ENCODE measurements at regions of chr11 and their contacts with region 1.

Region 1: GRCh38 chr11:85854557-85855340 is 434 bp upstream of the CCDC83 start:
- DNase-seq: peak; percentile 86 to 96 (median 89)
- ATAC-seq: peak; percentile 97
- H3K4me3 ChIP-seq: peak overlapping the region; percentile 64 to 72
- H3K4me3 Mint-ChIP-seq: peak overlapping the region; percentile 88
- H3K27ac ChIP-seq: peak overlapping the region; percentile 75 to 77
- H3K27ac Mint-ChIP-seq: peak overlapping the region; percentile 91
- H3K4me1 ChIP-seq: peaks cover 6% of the 10 kb centered on the region
- H3K4me1 Mint-ChIP-seq: peaks cover 8% of the 10 kb centered on the region
- H3K27me3 ChIP-seq: no peaks in the 10 kb centered on the region
- H3K27me3 Mint-ChIP-seq: no peaks in the 10 kb centered on the region
- CTCF ChIP-seq: peak; percentile 84

Region 2: GRCh38 chr11:85602526-85603213 is 252.1 kb before region 1 on chr11:
- CTCF ChIA-PET with region 1: no interaction called
- POLR2A ChIA-PET with region 1: no interaction called
- intact Hi-C with region 1: no loop called
- DNase-seq: no peak
- ATAC-seq: no peak
- H3K4me3 ChIP-seq: no peak overlapping the region
- H3K4me3 Mint-ChIP-seq: no peak overlapping the region
- H3K27ac ChIP-seq: no peak overlapping the region
- H3K27ac Mint-ChIP-seq: no peak overlapping the region
- H3K4me1 ChIP-seq: no peaks in the 10 kb centered on the region
- H3K4me1 Mint-ChIP-seq: no peaks in the 10 kb centered on the region
- H3K27me3 ChIP-seq: no peaks in the 10 kb centered on the region
- H3K27me3 Mint-ChIP-seq: no peaks in the 10 kb centered on the region
- CTCF ChIP-seq: no peak

Region 3: DNA sequence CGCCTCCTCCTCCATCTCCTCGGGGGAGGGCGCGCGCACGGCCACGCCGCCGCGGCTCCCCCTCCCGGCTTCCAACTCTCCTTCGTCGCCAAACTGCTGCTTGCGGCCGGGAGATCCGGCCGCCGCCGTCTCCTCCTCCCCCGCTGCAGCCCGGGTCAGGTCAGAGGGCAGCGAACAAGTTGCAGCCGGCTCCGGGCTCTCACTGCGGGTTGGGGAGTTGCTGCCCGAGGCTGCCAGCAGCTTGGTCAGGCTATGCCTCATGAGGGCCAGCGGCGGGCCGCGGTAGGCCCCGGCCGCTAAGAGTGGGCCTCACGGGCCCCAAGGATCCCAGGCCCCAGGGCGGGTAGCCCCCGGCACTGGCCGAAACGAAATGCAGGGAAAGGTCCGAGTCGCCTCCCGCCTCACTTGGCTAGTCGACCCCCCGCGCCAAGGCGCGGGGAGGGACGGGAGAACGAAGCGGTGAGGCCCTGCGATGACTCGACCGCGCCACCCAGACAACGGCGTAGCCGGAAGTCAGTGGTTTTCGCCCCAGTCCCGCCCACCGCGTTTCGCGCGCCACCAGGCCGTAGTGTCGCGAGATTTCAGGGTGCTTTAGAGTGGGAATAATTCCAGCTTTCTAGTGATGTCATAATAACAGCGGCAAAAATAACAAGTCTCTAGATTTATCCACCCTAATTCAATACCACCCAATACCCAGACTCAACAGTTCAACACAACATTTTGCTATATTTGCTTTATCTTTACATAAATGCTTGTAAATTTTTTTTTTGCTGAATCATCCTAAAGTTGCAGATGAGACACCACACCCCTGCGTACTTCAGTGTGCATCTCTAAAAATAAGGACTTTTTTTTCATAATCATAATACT is 189.9 kb before region 1 on chr11 and contains the start of gene CREBZF:
- CTCF ChIA-PET with region 1: interaction called, 3 read pairs
- POLR2A ChIA-PET with region 1: interaction called, 4 read pairs
- intact Hi-C with region 1: loop called in 1 of 2 experiments (anchors 1 kb)
- DNase-seq: peak; percentile 84 to 96 (median 94)
- ATAC-seq: peak; percentile 61
- H3K4me3 ChIP-seq: peak within 1 kb of the TSS; percentile 78 to 94
- H3K4me3 Mint-ChIP-seq: peak within 1 kb of the TSS; percentile 100
- H3K27ac ChIP-seq: peak within 1 kb of the TSS; percentile 96 to 97
- H3K27ac Mint-ChIP-seq: peak within 1 kb of the TSS; percentile 100
- H3K4me1 ChIP-seq: peaks cover 38% of the 10 kb centered on the region
- H3K4me1 Mint-ChIP-seq: peaks cover 43% of the 10 kb centered on the region
- H3K27me3 ChIP-seq: no peaks in the 10 kb centered on the region
- H3K27me3 Mint-ChIP-seq: no peaks in the 10 kb centered on the region
- CTCF ChIP-seq: no peak
- total RNA-seq, gene CREBZF: 32.2 to 33.3 TPM

Region 4: DNA sequence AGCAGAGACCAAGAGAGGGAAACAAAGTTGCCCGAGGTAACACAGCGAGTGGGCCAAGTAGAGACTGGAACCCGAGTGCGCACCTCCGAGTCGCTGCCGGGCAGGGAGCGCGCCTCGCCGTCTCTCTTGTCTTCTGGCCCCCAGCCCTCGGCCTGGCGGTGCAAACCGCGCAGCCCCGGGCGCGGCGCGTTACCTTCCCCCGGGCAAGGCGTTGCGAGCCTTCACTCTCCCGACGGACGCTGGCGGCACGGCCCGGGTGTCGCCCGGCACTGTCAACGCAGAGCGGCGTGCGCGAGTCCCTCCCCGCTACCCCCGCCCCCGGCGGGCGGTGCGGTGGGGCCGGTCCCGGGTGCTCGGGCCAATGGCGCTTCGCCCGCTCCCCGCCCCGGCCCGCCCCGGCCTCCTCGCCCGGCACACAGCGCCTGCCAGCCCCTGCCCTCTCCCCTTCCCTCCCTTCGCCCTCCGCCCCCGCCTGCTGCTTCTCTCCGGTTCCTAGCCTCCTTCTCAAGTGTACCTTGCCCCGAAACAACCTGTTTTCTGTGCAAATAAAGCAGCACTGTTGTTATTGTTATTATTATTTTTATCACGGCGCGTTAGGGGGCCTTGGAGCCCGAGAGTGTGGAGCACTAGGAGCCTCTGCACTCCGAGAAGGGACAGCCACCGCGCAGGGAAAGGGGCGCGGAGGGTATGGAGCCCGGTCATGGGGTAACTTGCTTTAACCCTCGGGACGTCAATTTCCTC is 43.7 kb before region 1 on chr11 and contains the start of gene SYTL2:
- CTCF ChIA-PET with region 1: interaction called, 10 read pairs
- POLR2A ChIA-PET with region 1: interaction called, 11 read pairs
- intact Hi-C with region 1: loop called in 1 of 2 experiments (anchors 1 kb)
- DNase-seq: peak; percentile 53 to 89 (median 74)
- ATAC-seq: peak; percentile 78
- H3K4me3 ChIP-seq: peak within 1 kb of the TSS; percentile 68 to 85
- H3K4me3 Mint-ChIP-seq: peak within 1 kb of the TSS; percentile 93
- H3K27ac ChIP-seq: peak within 1 kb of the TSS; percentile 50 to 56
- H3K27ac Mint-ChIP-seq: peak within 1 kb of the TSS; percentile 93
- H3K4me1 ChIP-seq: peaks cover 19% of the 10 kb centered on the region
- H3K4me1 Mint-ChIP-seq: peaks cover 48% of the 10 kb centered on the region
- H3K27me3 ChIP-seq: no peaks in the 10 kb centered on the region
- H3K27me3 Mint-ChIP-seq: peaks cover 2% of the 10 kb centered on the region
- CTCF ChIP-seq: no peak
- total RNA-seq, gene SYTL2: 37.2 to 43.6 TPM

Region 5: GRCh38 chr11:85867751-85868150 is 13.0 kb after region 1 on chr11:
- CTCF ChIA-PET with region 1: interaction called, 14 read pairs
- POLR2A ChIA-PET with region 1: no interaction called
- intact Hi-C with region 1: no loop called
- DNase-seq: no peak
- ATAC-seq: no peak
- H3K4me3 ChIP-seq: no peak overlapping the region
- H3K4me3 Mint-ChIP-seq: no peak overlapping the region
- H3K27ac ChIP-seq: no peak overlapping the region
- H3K27ac Mint-ChIP-seq: no peak overlapping the region
- H3K4me1 ChIP-seq: no peaks in the 10 kb centered on the region
- H3K4me1 Mint-ChIP-seq: no peaks in the 10 kb centered on the region
- H3K27me3 ChIP-seq: no peaks in the 10 kb centered on the region
- H3K27me3 Mint-ChIP-seq: no peaks in the 10 kb centered on the region
- CTCF ChIP-seq: no peak

Region 6: DNA sequence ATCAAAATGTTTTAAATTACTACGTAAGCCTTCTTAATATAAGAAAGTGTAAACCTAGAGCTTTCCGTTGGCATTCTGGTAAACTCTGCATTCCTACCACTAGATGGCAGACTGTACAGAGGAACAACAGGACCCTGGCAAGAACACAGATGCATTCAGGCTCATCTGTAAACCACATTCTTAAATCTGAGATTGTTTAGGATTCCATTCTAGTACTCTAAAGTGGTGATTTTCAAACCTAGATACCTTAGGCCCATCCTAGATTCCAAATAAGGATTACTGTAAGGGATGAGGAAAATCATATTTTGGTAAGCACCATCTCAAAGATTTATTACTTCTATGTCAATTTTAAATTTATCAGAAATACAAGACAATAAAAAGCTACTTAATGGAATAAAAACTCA is 187.2 kb after region 1 on chr11:
- CTCF ChIA-PET with region 1: interaction called, 9 read pairs
- POLR2A ChIA-PET with region 1: no interaction called
- intact Hi-C with region 1: loop called (anchors 2 to 10 kb)
- DNase-seq: peak in 6 of 9 experiments; percentile 30 to 89 (median 43)
- ATAC-seq: peak; percentile 94
- H3K4me3 ChIP-seq: no peak overlapping the region
- H3K4me3 Mint-ChIP-seq: no peak overlapping the region
- H3K27ac ChIP-seq: peak overlapping the region in 1 of 2 experiments; percentile 47
- H3K27ac Mint-ChIP-seq: peak overlapping the region; percentile 66
- H3K4me1 ChIP-seq: peaks cover 46% of the 10 kb centered on the region
- H3K4me1 Mint-ChIP-seq: peaks cover 65% of the 10 kb centered on the region
- H3K27me3 ChIP-seq: no peaks in the 10 kb centered on the region
- H3K27me3 Mint-ChIP-seq: no peaks in the 10 kb centered on the region
- CTCF ChIP-seq: peak; percentile 67

Region 7: DNA sequence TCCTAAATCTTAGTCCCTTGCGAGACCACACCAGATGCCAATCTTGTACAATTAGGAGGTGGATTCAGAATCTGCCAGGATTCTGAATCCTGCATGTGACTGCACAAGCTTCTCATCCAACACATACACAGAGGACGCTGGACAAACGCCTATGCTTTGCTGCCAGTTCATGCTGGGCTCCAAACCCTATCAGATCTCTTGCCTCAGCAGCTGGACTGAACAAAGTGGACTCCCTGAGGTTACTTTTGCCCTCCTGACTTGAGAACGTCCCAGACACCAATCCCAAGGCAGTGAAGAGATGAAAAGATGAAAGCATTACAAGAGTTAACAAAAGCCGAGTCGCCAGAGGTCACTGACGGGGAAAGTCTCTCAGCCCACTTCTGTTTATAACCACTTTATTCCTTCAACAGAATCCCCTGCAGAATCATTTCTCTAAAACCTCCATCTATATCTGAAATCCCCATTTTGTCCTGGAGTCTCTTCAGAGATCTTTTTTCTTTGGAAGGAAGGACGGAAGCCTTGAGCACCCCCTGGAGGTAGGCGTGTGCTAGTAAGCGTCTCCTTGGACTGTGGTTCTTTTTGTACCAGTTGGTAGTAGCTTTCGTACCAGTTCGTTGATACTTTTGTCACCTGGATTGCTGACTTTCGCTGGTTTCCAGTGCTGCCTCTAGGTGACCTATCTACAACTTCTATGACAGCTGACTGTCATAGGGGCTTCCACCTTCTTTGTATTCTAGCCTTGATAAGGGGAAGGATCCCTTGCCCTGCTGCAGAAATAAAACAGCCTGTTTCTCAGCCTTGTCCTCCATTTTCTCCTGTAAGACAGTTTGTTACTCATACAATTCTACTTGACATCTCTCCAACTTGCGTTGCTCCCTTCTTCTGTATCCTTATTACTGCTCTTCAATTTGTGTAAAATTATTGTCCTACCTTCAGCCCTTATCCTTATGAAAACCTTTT is 363.7 kb after region 1 on chr11:
- CTCF ChIA-PET with region 1: interaction called, 10 read pairs
- POLR2A ChIA-PET with region 1: no interaction called
- intact Hi-C with region 1: loop called in 1 of 2 experiments (anchors 1 kb)
- DNase-seq: peak; percentile 17 to 81 (median 59)
- ATAC-seq: peak; percentile 93
- H3K4me3 ChIP-seq: peak overlapping the region in 1 of 2 experiments; percentile 38
- H3K4me3 Mint-ChIP-seq: peak overlapping the region; percentile 61
- H3K27ac ChIP-seq: no peak overlapping the region
- H3K27ac Mint-ChIP-seq: no peak overlapping the region
- H3K4me1 ChIP-seq: no peaks in the 10 kb centered on the region
- H3K4me1 Mint-ChIP-seq: peaks cover 2% of the 10 kb centered on the region
- H3K27me3 ChIP-seq: no peaks in the 10 kb centered on the region
- H3K27me3 Mint-ChIP-seq: peaks cover 7% of the 10 kb centered on the region
- CTCF ChIP-seq: peak; percentile 74

Measured in CD8-positive, alpha-beta T cell (primary cell).